T-cell (primary cell): ENCODE measurements at regions of chr7 and their contacts with region 1.

Region 1: GRCh38 chr7:23523486-23524075 is 8.2 kb downstream of the TRA2A start:
- DNase-seq: no peak
- ATAC-seq: no peak
- H3K4me3 ChIP-seq: no peak overlapping the region
- H3K4me3 Mint-ChIP-seq: peak overlapping the region in 1 of 3 donors; percentile 66
- H3K27ac ChIP-seq: peak overlapping the region; percentile 11
- H3K27ac Mint-ChIP-seq: peak overlapping the region; percentile 11 to 21
- H3K4me1 ChIP-seq: peaks cover 23 to 33% of the 10 kb centered on the region in 2 experiments
- H3K4me1 Mint-ChIP-seq: peaks cover 70 to 77% (median 74%) of the 10 kb centered on the region in 3 donors
- H3K27me3 ChIP-seq: no peaks in the 10 kb centered on the region
- H3K27me3 Mint-ChIP-seq: no peaks in the 10 kb centered on the region

Region 2: DNA sequence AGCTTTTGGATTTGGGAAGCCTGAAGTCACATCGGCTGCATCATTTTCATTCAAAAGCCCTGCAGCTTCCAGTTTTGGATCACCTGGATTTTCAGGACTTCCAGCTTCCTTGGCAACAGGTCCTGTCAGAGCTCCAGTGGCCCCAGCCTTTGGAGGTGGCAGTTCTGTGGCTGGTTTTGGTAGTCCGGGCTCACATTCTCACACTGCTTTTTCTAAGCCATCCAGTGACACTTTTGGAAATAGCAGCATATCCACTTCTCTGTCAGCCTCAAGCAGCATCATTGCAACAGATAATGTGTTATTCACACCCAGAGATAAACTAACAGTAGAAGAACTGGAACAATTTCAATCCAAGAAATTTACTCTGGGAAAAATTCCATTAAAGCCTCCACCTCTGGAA is 323.2 kb before region 1 on chr7:
- CTCF ChIA-PET with region 1: no interaction called
- POLR2A ChIA-PET with region 1: no interaction called
- DNase-seq: no peak
- ATAC-seq: no peak
- H3K4me3 ChIP-seq: no peak overlapping the region
- H3K4me3 Mint-ChIP-seq: no peak overlapping the region
- H3K27ac ChIP-seq: no peak overlapping the region
- H3K27ac Mint-ChIP-seq: no peak overlapping the region
- H3K4me1 ChIP-seq: no peaks in the 10 kb centered on the region
- H3K4me1 Mint-ChIP-seq: peaks cover 0 to under 1% (median 0%) of the 10 kb centered on the region in 3 donors
- H3K27me3 ChIP-seq: no peaks in the 10 kb centered on the region
- H3K27me3 Mint-ChIP-seq: peaks cover 2 to 3% of the 10 kb centered on the region in 2 donors

Region 3: DNA sequence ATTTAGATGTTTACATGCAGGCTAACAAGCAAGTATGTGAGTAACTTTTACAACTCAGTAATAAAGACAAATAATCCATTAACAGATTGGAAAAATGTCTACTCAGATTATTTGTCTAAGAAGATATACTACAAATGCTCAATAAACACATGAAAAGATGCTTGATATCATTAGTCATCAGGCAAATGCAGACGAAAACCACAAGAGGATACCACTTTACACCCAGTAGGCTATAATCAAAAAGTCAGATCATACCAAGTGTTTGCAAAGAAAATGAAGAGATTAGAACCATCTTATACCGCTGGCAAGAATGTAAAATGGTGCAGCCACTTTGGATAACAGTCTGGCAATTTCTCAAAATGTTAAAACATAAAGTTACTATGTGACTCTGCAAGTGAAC is 140.4 kb before region 1 on chr7:
- CTCF ChIA-PET with region 1: no interaction called
- POLR2A ChIA-PET with region 1: no interaction called
- DNase-seq: no peak
- ATAC-seq: no peak
- H3K4me3 ChIP-seq: no peak overlapping the region
- H3K4me3 Mint-ChIP-seq: no peak overlapping the region
- H3K27ac ChIP-seq: no peak overlapping the region
- H3K27ac Mint-ChIP-seq: no peak overlapping the region
- H3K4me1 ChIP-seq: peaks cover 0 to 10% of the 10 kb centered on the region in 2 experiments
- H3K4me1 Mint-ChIP-seq: peaks cover 0 to 3% (median 0%) of the 10 kb centered on the region in 3 donors
- H3K27me3 ChIP-seq: peaks cover 0 to 11% of the 10 kb centered on the region in 2 experiments
- H3K27me3 Mint-ChIP-seq: peaks cover 4 to 13% of the 10 kb centered on the region in 2 donors

Region 4: GRCh38 chr7:23539494-23539907 is 15.9 kb after region 1 on chr7:
- CTCF ChIA-PET with region 1: interaction called, 5 to 22 read pairs
- POLR2A ChIA-PET with region 1: interaction called, 11 to 16 read pairs
- DNase-seq: peak in 1 of 35 experiments; percentile 37
- ATAC-seq: peak; percentile 79 to 92 (median 88)
- H3K4me3 ChIP-seq: peak overlapping the region in 1 of 2 donors; percentile 29
- H3K4me3 Mint-ChIP-seq: peak overlapping the region; percentile 48 to 61 (median 58)
- H3K27ac ChIP-seq: peak overlapping the region; percentile 73
- H3K27ac Mint-ChIP-seq: peak overlapping the region; percentile 89 to 97
- H3K4me1 ChIP-seq: peaks cover 11 to 19% of the 10 kb centered on the region in 2 experiments
- H3K4me1 Mint-ChIP-seq: peaks cover 16 to 18% (median 17%) of the 10 kb centered on the region in 3 donors
- H3K27me3 ChIP-seq: no peaks in the 10 kb centered on the region
- H3K27me3 Mint-ChIP-seq: no peaks in the 10 kb centered on the region

Region 5: GRCh38 chr7:23546897-23547572 is 23.5 kb after region 1 on chr7:
- CTCF ChIA-PET with region 1: interaction called, 3 to 22 read pairs
- POLR2A ChIA-PET with region 1: no interaction called
- DNase-seq: peak; percentile 52 to 93 (median 71)
- ATAC-seq: peak; percentile 91 to 94 (median 93)
- H3K4me3 ChIP-seq: no peak overlapping the region
- H3K4me3 Mint-ChIP-seq: no peak overlapping the region
- H3K27ac ChIP-seq: no peak overlapping the region
- H3K27ac Mint-ChIP-seq: peak overlapping the region; percentile 25 to 36
- H3K4me1 ChIP-seq: no peaks in the 10 kb centered on the region
- H3K4me1 Mint-ChIP-seq: peaks cover 0 to 10% (median 8%) of the 10 kb centered on the region in 3 donors
- H3K27me3 ChIP-seq: no peaks in the 10 kb centered on the region
- H3K27me3 Mint-ChIP-seq: no peaks in the 10 kb centered on the region

Region 6: GRCh38 chr7:23654508-23654907 is 130.9 kb after region 1 on chr7:
- CTCF ChIA-PET with region 1: no interaction called
- POLR2A ChIA-PET with region 1: no interaction called
- DNase-seq: peak in 1 of 35 experiments; percentile 4
- ATAC-seq: no peak
- H3K4me3 ChIP-seq: no peak overlapping the region
- H3K4me3 Mint-ChIP-seq: no peak overlapping the region
- H3K27ac ChIP-seq: no peak overlapping the region
- H3K27ac Mint-ChIP-seq: no peak overlapping the region
- H3K4me1 ChIP-seq: no peaks in the 10 kb centered on the region
- H3K4me1 Mint-ChIP-seq: no peaks in the 10 kb centered on the region
- H3K27me3 ChIP-seq: no peaks in the 10 kb centered on the region
- H3K27me3 Mint-ChIP-seq: no peaks in the 10 kb centered on the region